ENCODE measurements at regions of chr3 and their contacts with region 1.

Region 1: GRCh38 chr3:157088601-157089454 is 71.1 kb downstream of the CCNL1 start:
- DNase-seq: peak; percentile 96
- H3K4me3 ChIP-seq: peak overlapping the region; percentile 47
- H3K27ac ChIP-seq: peak overlapping the region; percentile 92
- H3K4me1 ChIP-seq: peaks cover 43% of the 10 kb centered on the region
- H3K27me3 ChIP-seq: no peaks in the 10 kb centered on the region
- CTCF ChIP-seq: no peak; the same call in 1 of the 2 replicates

Region 2: DNA sequence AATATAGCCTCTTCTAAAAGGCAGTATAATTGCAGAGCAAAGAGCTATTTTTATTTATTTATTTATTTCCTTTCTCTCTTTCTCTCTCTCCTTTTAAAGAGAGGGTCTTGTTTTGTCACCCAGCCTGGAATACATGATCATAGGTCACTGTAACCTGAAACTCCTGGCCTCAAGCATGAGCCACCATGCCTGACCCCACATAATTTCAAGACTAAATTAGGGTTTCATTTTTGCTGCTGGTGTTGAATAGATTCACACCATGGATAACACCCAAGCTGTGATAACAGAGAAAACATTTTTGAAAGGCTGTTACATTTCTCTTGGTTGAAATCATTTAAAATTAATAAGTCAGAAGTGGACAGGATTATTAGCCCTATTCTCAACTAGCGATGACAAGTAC is 131.1 kb before region 1 on chr3:
- CTCF ChIA-PET with region 1: no interaction called
- POLR2A ChIA-PET with region 1: no interaction called
- intact Hi-C with region 1: no loop called
- DNase-seq: no peak
- H3K4me3 ChIP-seq: no peak overlapping the region
- H3K27ac ChIP-seq: no peak overlapping the region
- H3K4me1 ChIP-seq: no peaks in the 10 kb centered on the region
- H3K27me3 ChIP-seq: no peaks in the 10 kb centered on the region
- CTCF ChIP-seq: no peak

Region 3: GRCh38 chr3:157056035-157056434 is 32.8 kb before region 1 on chr3:
- CTCF ChIA-PET with region 1: no interaction called
- POLR2A ChIA-PET with region 1: no interaction called
- intact Hi-C with region 1: no loop called
- DNase-seq: no peak
- H3K4me3 ChIP-seq: no peak overlapping the region
- H3K27ac ChIP-seq: no peak overlapping the region
- H3K4me1 ChIP-seq: peaks cover 9% of the 10 kb centered on the region
- H3K27me3 ChIP-seq: no peaks in the 10 kb centered on the region
- CTCF ChIP-seq: no peak

Region 4: DNA sequence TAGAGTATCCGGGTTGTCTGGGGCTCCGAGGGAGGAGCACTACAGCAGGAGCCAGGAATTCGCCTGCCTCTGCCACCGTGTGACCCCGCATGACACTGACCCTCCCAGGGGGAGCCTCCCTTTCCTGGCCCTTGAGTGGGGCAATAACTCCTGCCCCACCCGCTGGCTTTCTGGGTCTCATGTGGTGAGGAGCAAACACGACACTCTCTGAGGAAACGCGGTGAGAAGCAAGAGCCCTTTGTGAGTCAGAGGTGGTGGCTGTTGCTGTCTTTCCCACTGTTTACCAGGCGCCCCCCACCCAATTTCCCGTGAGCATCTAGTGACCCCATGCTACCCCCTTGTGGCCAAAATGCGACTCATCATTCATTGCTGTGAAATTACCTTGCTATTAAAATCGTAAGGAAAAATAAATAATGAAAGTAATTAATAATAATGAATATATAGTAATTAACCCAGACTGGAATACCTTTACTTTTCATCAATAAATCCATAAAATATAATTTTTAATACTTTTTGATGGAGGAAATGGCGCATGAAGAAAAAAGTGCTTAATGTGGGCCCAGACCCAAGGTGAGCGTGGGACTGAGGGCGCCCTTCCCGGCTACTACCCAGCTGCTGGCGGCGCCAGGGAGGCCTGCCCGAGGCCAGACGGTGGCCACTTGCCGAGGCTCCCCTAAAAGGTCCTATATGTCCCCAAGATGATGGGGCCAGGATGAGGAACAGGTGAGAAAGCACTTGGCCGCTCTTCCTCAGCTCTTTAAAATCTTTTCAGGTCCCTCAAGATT is 41.8 kb after region 1 on chr3:
- CTCF ChIA-PET with region 1: no interaction called
- POLR2A ChIA-PET with region 1: no interaction called
- intact Hi-C with region 1: loop called (anchors 2 kb)
- DNase-seq: peak; percentile 82
- H3K4me3 ChIP-seq: peak overlapping the region; percentile 7
- H3K27ac ChIP-seq: peak overlapping the region; percentile 75
- H3K4me1 ChIP-seq: peaks cover 46% of the 10 kb centered on the region
- H3K27me3 ChIP-seq: no peaks in the 10 kb centered on the region
- CTCF ChIP-seq: peak; percentile 84

Region 5: DNA sequence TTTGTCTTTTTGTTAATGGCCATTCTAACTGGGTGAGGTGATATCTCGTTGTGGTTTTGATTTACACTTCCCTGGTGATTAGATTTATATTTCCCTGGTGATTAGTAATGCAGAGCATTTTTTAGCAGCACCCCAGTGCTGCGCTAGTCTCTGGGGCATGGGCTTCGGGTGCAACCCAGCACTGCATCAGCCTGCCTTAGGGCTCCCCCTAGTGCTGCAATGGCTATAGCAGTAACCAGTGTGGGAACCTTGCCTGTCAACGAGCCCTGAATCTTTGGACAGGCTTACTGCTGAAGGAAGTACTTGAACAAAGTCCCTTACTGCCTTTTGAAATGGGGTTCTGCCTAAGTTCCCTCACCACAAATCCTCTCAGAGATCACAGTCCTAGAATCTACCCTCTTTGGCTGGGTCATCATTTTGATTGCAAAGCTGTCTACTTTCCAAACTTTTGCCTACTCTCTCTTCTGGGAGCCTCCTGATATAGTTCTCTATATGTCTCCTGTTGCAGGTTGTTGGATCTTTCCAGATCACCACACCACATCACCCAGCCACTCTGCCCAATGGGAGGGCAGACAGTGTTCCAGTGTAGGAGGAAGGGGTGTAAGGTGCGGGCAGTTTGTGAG is 150.4 kb after region 1 on chr3:
- CTCF ChIA-PET with region 1: no interaction called
- POLR2A ChIA-PET with region 1: no interaction called
- intact Hi-C with region 1: no loop called
- DNase-seq: peak; percentile 79
- H3K4me3 ChIP-seq: no peak overlapping the region
- H3K27ac ChIP-seq: no peak overlapping the region
- H3K4me1 ChIP-seq: no peaks in the 10 kb centered on the region
- H3K27me3 ChIP-seq: no peaks in the 10 kb centered on the region
- CTCF ChIP-seq: peak; percentile 93

Region 6: GRCh38 chr3:157274644-157275137 is 185.9 kb after region 1 on chr3:
- CTCF ChIA-PET with region 1: no interaction called
- POLR2A ChIA-PET with region 1: no interaction called
- intact Hi-C with region 1: no loop called
- DNase-seq: peak; percentile 25
- H3K4me3 ChIP-seq: no peak overlapping the region
- H3K27ac ChIP-seq: no peak overlapping the region
- H3K4me1 ChIP-seq: no peaks in the 10 kb centered on the region
- H3K27me3 ChIP-seq: no peaks in the 10 kb centered on the region
- CTCF ChIP-seq: no peak